HEK293 (cell line): ENCODE measurements at regions of chr20 and their contacts with region 1.

Region 1: DNA sequence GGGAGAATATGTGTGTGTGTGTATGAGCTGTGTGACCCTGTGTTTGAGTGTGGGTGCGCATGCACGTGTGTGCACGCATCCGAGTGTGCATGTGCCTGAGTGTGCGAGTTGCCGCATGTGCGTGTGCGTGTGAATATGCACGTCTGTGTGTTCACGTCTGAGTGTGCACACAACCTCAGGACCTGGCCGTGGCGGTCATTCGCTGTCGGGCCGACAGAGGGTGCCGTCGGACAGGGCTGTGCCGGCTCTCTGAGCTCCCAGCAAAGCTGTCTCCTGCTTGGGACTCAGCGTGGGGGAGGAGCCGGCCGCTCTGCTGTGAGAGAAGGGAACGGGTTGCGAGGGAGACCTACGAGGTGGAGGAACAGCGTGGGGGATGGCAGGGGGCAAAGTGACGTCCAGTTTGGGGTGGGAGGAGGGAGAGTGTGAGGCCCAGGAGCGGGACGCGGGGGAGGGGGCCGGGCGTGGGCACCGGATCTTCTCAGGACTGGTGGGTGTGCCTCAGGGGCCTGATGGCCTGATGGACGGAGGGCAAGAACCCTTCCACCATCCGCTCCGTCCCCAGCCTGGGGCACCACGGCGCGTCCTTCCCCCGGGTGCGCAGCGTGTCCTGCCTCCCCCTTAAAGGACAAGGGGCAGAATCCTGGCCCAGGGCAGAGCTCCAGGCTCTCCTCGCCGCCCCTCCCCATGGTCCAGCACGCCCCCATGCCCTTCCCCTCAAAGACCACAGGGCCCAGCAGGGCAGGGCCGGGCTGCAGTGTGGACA is 19.9 kb downstream of the SLC17A9 start:
- H3K4me3 ChIP-seq: no peak overlapping the region
- H3K27ac ChIP-seq: no peak overlapping the region
- H3K4me1 ChIP-seq: no peaks in the 10 kb centered on the region
- CTCF ChIP-seq: peak; percentile 97

Region 2: DNA sequence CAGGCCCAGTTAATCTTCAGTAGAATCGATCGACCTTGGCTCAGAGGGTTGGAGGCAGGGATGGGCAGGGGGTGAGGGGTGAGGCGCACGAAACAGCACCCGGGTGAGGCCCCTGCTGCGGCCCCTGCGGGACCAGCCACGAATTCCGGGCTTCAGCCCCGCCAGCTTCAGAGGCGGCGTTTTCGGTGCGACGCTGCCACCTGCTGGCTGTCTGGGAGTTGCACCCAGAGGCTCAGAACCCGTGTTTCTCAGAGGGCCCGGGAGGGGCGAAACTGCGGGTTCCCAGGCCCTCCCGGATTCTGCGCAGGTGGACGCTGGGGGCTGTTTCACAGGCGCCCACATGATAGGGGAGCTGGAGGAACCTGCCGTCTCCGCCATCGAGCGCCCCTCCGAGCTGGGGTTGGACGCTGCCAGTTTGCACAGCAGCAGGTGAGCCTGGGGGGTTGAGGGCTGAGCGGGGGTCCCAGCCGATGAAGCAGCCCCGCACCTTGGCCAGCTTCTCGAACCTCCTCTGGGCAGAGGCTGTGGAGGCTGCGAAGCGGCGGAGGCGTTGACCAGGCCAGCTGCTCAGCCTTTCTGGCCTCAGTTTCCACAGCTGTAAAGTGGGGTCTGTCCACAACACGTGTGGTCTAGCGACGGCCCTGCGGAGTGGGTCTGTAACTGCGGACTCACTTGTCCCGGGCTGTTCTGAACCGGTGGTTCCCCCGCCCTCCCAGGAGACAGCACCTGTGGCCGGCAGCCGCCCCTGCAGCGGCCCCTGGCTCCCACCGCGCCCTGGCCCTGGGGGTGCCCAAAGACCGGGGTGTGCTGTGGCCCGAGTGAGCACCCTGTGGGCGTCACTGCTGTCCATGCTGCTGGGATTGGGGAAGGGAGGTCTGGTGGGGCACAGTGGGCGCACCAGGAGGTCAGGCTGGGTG is 36.9 kb after region 1 on chr20:
- CTCF ChIA-PET with region 1: interaction called, 30 read pairs
- POLR2A ChIA-PET with region 1: interaction called, 3 read pairs
- H3K4me3 ChIP-seq: no peak overlapping the region
- H3K27ac ChIP-seq: no peak overlapping the region
- H3K4me1 ChIP-seq: no peaks in the 10 kb centered on the region
- CTCF ChIP-seq: peak; percentile 94